ENCODE measurements at regions of chr1 and their contacts with region 1.

Region 1: GRCh38 chr1:71049951-71050598 is 2.5 kb upstream of the PTGER3 start:
- DNase-seq: peak in 1 of 2 donors; percentile 73
- ATAC-seq: peak; percentile 76 to 83 (median 80)
- H3K4me3 ChIP-seq: no peak overlapping the region
- H3K4me3 Mint-ChIP-seq: no peak overlapping the region
- H3K27ac ChIP-seq: no peak overlapping the region
- H3K27ac Mint-ChIP-seq: no peak overlapping the region
- H3K4me1 ChIP-seq: peaks cover 18% of the 10 kb centered on the region
- H3K4me1 Mint-ChIP-seq: peaks cover 15 to 17% of the 10 kb centered on the region in 2 donors
- H3K27me3 ChIP-seq: peaks cover 40% of the 10 kb centered on the region
- H3K27me3 Mint-ChIP-seq: peaks cover 34 to 46% of the 10 kb centered on the region in 2 donors
- CTCF ChIP-seq: peak; percentile 77

Region 2: DNA sequence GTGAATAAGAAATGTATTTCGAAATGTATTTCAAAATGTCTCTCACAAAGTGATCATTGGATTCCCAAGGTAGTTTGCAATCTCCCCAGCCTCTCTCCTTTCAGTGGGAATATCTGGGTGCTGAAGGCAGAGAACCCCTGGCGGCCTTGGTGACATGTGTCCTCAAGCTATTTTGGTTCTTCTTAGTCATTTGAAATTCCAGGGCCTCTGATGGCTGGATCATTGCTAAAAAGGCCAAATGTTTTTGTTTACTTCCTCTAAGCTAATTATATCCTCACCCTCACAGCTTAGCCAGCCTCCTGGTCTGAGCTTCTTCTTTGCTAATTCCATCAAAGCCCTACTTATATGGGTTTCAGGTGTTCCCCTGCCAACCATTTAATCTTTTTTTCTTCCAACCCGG is 915.9 kb before region 1 on chr1:
- intact Hi-C with region 1: loop called (anchors 2 kb)
- DNase-seq: no peak
- ATAC-seq: no peak
- H3K4me3 ChIP-seq: no peak overlapping the region
- H3K4me3 Mint-ChIP-seq: no peak overlapping the region
- H3K27ac ChIP-seq: no peak overlapping the region
- H3K27ac Mint-ChIP-seq: no peak overlapping the region
- H3K4me1 ChIP-seq: no peaks in the 10 kb centered on the region
- H3K4me1 Mint-ChIP-seq: peaks cover 0 to 5% of the 10 kb centered on the region in 2 donors
- H3K27me3 ChIP-seq: no peaks in the 10 kb centered on the region
- H3K27me3 Mint-ChIP-seq: peaks cover 0 to 8% of the 10 kb centered on the region in 2 donors
- CTCF ChIP-seq: no peak

Region 3: GRCh38 chr1:70528590-70529333 is 521.3 kb before region 1 on chr1:
- intact Hi-C with region 1: loop called (anchors 5 kb)
- DNase-seq: peak in 1 of 2 donors; percentile 38
- ATAC-seq: peak in 2 of 3 donors; percentile 26 to 69
- H3K4me3 ChIP-seq: no peak overlapping the region
- H3K4me3 Mint-ChIP-seq: no peak overlapping the region
- H3K27ac ChIP-seq: no peak overlapping the region
- H3K27ac Mint-ChIP-seq: no peak overlapping the region
- H3K4me1 ChIP-seq: no peaks in the 10 kb centered on the region
- H3K4me1 Mint-ChIP-seq: peaks cover 0 to 9% of the 10 kb centered on the region in 2 donors
- H3K27me3 ChIP-seq: peaks cover 5% of the 10 kb centered on the region
- H3K27me3 Mint-ChIP-seq: peaks cover 16 to 21% of the 10 kb centered on the region in 2 donors
- CTCF ChIP-seq: no peak

Region 4: GRCh38 chr1:70685300-70686241 is 364.5 kb before region 1 on chr1:
- intact Hi-C with region 1: loop called (anchors 1 kb)
- DNase-seq: peak; percentile 22 to 60
- ATAC-seq: peak; percentile 89 to 98 (median 91)
- H3K4me3 ChIP-seq: no peak overlapping the region
- H3K4me3 Mint-ChIP-seq: no peak overlapping the region
- H3K27ac ChIP-seq: no peak overlapping the region
- H3K27ac Mint-ChIP-seq: no peak overlapping the region
- H3K4me1 ChIP-seq: no peaks in the 10 kb centered on the region
- H3K4me1 Mint-ChIP-seq: no peaks in the 10 kb centered on the region
- H3K27me3 ChIP-seq: no peaks in the 10 kb centered on the region
- H3K27me3 Mint-ChIP-seq: peaks cover 16 to 38% of the 10 kb centered on the region in 2 donors
- CTCF ChIP-seq: peak; percentile 69

Measured in natural killer cell (primary cell).